ENCODE measurements at regions of chr7 and their contacts with region 1.

Region 1: DNA sequence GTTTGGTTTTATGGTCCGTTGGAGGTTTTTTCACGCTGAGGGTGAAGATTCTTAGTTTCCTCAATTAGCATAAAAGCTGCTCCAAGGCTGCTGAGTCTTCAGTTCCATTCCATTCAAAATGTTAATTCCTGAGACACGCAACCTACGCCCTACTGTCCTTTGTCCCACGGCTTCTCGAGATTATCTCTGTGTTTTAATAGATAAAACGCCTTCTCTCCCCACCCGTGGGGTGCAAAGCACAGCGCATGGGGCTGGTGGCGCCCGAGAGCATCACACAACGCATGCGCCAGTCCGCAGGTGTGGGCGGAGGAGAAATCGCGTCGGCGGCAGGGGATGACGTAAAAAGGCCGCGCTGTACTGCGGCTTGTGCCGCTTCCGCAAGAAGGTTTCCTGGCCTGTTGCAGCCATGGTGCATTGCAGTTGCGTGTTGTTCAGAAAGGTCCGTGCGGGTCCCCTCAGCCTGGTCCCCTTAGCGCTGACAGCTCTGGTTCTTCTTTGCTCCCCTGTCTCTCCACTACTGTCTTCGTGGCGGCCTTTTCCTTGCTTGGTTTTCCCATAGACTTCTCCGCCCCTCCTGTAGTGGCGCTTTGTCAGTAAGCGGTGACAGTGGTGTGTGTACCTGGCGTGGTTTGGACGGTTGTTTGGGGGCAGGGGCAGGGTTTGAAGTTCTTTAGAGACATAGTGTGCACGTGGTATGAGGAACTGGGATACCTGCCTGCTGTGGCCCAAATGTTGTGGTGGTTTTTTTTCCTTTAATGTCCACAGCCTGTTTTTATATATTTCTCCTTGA is at the start of gene GTPBP10:
- DNase-seq: peak; percentile 97
- ATAC-seq: peak; percentile 96
- H3K4me3 Mint-ChIP-seq: peak within 1 kb of the TSS; percentile 92
- H3K27ac Mint-ChIP-seq: peak within 1 kb of the TSS; percentile 94
- H3K4me1 Mint-ChIP-seq: peaks cover 36% of the 10 kb centered on the region
- H3K27me3 Mint-ChIP-seq: no peaks in the 10 kb centered on the region
- total RNA-seq, gene GTPBP10: 40.8 to 42.5 TPM

Region 2: DNA sequence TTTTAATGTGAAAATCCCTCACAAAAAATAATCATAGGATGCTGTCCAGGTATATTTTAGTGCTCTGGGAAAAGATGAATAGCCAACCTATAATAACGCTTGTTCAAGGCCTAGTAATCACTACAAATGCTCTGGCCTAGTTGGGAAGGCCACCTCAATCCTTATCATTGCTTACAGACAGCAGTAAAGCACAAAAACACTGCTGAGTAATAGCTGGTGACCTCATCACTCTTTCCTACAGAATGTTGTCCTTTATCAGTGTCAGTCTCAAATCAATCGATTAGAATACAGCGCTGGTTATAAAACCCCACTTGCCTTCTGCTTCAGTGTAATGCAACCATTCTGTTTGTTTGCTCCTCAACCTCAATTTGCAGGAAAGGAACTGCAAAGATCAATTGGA is 264.9 kb before region 1 on chr7:
- CTCF ChIA-PET with region 1: no interaction called
- POLR2A ChIA-PET with region 1: no interaction called
- intact Hi-C with region 1: no loop called
- DNase-seq: no peak
- ATAC-seq: no peak
- H3K4me3 Mint-ChIP-seq: no peak overlapping the region
- H3K27ac Mint-ChIP-seq: no peak overlapping the region
- H3K4me1 Mint-ChIP-seq: no peaks in the 10 kb centered on the region
- H3K27me3 Mint-ChIP-seq: peaks cover 4% of the 10 kb centered on the region

Region 3: DNA sequence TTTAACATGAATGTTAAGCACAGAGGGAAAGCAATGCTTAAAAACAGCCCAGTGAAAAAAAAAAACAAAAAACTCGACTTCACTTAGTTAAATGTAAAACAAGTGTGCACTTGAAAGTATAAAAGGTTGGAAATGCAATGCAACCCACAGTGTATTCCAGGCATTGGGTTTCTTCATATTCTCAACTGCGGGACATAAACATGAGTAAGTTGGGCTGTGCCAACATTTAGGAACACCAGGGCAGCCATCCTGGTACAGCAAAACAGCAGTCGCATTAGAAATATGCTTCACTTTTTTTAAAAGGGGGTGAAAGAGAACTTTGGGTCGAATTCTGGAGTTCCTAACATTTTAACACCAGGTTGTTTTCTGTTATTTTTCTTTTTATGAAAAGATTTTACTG is 191.3 kb before region 1 on chr7:
- CTCF ChIA-PET with region 1: interaction called, 3 read pairs
- POLR2A ChIA-PET with region 1: no interaction called
- intact Hi-C with region 1: loop called in 1 of 2 experiments (anchors 2 kb)
- DNase-seq: no peak
- ATAC-seq: no peak
- H3K4me3 Mint-ChIP-seq: no peak overlapping the region
- H3K27ac Mint-ChIP-seq: no peak overlapping the region
- H3K4me1 Mint-ChIP-seq: peaks cover 5% of the 10 kb centered on the region
- H3K27me3 Mint-ChIP-seq: peaks cover 31% of the 10 kb centered on the region

Region 4: GRCh38 chr7:90383861-90384260 is 37.3 kb after region 1 on chr7:
- CTCF ChIA-PET with region 1: no interaction called
- POLR2A ChIA-PET with region 1: no interaction called
- intact Hi-C with region 1: no loop called
- DNase-seq: no peak
- ATAC-seq: no peak
- H3K4me3 Mint-ChIP-seq: no peak overlapping the region
- H3K27ac Mint-ChIP-seq: no peak overlapping the region
- H3K4me1 Mint-ChIP-seq: no peaks in the 10 kb centered on the region
- H3K27me3 Mint-ChIP-seq: no peaks in the 10 kb centered on the region

Region 5: GRCh38 chr7:90403174-90404113 is 56.9 kb after region 1 on chr7 and contains the start of gene CLDN12:
- CTCF ChIA-PET with region 1: interaction called, 4 read pairs
- POLR2A ChIA-PET with region 1: no interaction called
- intact Hi-C with region 1: loop called (anchors 1 kb)
- DNase-seq: peak; percentile 88
- ATAC-seq: peak; percentile 98
- H3K4me3 Mint-ChIP-seq: peak within 1 kb of the TSS; percentile 96
- H3K27ac Mint-ChIP-seq: peak within 1 kb of the TSS; percentile 97
- H3K4me1 Mint-ChIP-seq: peaks cover 11% of the 10 kb centered on the region
- H3K27me3 Mint-ChIP-seq: no peaks in the 10 kb centered on the region
- total RNA-seq, gene CLDN12: 5.4 to 5.8 TPM

Region 6: DNA sequence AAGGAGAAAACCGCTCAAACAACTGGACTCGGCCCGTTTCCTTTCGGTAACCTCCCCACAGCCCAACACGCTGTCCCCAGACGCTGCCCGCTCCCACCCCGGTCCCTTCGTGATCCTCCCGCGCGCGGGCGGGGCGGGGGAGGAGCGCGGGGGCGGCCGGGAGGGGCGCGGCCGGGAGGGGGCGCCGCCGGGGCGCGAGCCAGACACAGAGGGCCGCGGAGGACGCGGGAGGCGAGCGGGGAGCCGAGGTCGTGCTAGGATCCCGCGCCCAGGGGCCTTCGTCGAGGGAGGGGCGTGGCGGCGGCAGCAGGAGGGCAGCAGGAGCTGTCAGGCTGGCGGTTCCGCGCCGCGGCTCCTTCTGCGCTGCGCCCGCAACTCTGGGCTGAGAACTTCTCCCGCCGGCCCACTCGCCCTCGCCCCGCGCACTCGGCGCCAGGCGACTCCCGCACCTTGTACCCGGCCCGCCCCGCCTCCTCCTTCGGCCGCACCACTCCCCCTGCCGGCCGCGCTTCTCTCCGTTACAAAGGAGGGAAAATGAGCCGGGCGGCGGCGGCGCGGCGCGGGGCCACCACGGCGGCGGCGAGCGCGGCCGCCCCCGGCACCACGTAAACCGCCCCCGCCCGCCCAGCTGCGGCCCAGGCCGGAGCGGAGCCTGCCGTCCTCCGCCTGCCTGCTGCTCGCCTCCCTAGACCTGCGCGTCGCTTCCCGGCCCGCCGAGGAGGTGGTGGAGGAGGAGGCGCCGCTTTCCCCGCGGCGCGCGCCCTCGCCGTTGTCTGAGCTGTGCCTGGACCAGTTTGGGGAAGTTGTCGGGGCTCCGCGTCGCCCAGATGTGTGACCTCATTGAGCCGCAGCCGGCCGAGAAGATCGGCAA is 249.5 kb after region 1 on chr7 and contains the start of gene CDK14:
- CTCF ChIA-PET with region 1: no interaction called
- POLR2A ChIA-PET with region 1: no interaction called
- intact Hi-C with region 1: loop called in 1 of 2 experiments (anchors 5 kb)
- DNase-seq: peak; percentile 76
- ATAC-seq: peak; percentile 74
- H3K4me3 Mint-ChIP-seq: peak within 1 kb of the TSS; percentile 67
- H3K27ac Mint-ChIP-seq: peak within 1 kb of the TSS; percentile 42
- H3K4me1 Mint-ChIP-seq: peaks cover 20% of the 10 kb centered on the region
- H3K27me3 Mint-ChIP-seq: peaks cover 46% of the 10 kb centered on the region
- total RNA-seq, gene CDK14: 0.80 to 0.84 TPM

Region 7: DNA sequence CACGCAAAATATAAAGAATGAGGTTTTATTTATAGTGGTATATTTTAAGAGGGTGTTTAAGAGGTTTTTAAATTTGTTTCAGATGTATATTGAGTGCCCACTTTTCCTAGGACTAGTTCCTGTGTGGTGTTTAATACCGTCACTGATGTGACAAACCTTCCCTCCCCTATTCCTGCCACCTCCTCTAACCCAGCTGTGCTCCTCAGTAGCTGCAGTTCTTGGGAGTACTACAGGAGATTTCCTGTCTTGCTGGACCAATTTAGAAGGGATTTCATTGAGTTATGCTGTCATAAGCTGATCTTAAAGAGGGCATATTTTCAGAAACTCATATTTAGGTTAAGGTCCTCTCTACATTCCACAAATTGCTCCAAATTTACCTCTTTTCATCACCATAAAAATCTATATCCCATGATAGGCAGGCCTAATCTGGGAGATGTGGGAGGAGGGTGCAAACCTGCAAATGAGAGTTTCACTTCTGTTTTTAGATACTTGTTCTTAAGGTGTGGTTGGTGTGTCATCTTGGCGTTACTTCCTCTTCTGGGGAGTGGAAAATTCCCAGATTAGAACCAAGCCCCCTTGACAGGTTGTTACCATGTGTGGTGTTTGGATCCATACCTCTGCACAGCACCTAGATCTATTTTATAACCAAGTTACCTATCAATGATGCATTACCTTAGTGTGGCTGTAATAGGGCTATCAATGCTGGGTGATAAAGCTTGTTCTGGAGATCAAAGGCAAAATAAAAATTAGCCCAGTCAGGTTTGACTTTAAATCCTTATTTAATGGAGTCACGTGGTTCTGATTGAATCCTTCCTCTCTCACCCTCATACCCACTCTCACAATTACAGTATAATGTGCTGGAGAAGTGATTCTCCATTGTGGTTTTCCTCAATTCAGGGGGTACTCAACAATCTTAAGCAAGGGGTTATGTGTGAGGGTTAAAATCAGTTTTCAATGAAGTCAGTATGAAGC is 390.7 kb after region 1 on chr7:
- CTCF ChIA-PET with region 1: no interaction called
- POLR2A ChIA-PET with region 1: no interaction called
- intact Hi-C with region 1: no loop called
- DNase-seq: peak; percentile 4
- ATAC-seq: peak; percentile 78
- H3K4me3 Mint-ChIP-seq: no peak overlapping the region
- H3K27ac Mint-ChIP-seq: no peak overlapping the region
- H3K4me1 Mint-ChIP-seq: peaks cover 8% of the 10 kb centered on the region
- H3K27me3 Mint-ChIP-seq: peaks cover 4% of the 10 kb centered on the region

Region 8: DNA sequence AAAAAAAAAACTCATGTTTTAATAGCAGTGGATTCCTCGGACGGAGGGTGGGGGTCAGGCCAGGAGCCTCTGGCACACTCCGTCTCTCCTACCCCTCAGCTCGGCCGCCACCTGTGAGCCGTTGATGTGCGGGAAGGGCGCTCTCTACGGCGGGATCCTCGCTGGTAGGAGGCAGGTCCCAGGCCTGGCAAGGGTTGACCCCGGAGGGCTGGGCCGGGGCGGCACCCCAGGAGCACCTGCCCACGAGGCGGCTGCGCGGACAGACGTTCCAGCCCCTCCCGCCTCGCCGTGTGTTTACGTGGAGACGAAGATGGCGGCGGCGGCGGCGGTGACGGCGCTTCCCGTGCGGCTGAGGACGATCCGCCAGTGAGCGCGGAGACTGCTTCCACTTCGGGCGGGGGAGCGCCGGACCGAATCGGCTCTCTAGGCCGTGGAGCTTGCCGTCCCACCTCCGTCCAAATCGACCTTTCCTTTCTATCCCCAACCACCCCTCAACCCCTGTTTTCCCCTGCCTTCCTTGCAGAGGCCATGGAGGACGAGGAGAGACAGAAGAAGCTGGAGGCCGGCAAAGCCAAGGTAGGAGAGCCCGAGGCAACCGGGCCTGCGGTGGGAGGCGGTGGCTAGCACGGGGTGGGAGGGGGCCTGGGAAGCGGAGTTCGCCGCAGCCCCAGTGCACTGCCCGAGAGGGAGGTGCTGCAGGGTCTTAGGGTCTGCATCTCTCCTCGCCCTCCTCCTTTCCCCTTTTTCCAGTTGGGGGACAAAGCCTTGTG is 1594.2 kb after region 1 on chr7 and contains the start of gene AKAP9:
- CTCF ChIA-PET with region 1: no interaction called
- POLR2A ChIA-PET with region 1: no interaction called
- intact Hi-C with region 1: loop called in 1 of 2 experiments (anchors 10 kb)
- DNase-seq: peak; percentile 94
- ATAC-seq: peak; percentile 91
- H3K4me3 Mint-ChIP-seq: peak within 1 kb of the TSS; percentile 87
- H3K27ac Mint-ChIP-seq: peak within 1 kb of the TSS; percentile 94
- H3K4me1 Mint-ChIP-seq: peaks cover 29% of the 10 kb centered on the region
- H3K27me3 Mint-ChIP-seq: no peaks in the 10 kb centered on the region
- total RNA-seq, gene AKAP9: 25.3 to 25.4 TPM

Measured in activated CD4-positive, alpha-beta T cell treated with anti-CD3 and anti-CD28 coated beads for 36 hours (primary cell).